HCT116 (cell line): ENCODE measurements at regions of chr3 and their contacts with region 1.

Region 1: GRCh38 chr3:8324740-8325139 is 176.9 kb upstream of the LMCD1 start:
- DNase-seq: peak; percentile 40
- ATAC-seq: peak; percentile 98
- H3K4me3 ChIP-seq: no peak overlapping the region
- H3K27ac ChIP-seq: no peak overlapping the region
- H3K4me1 ChIP-seq: peaks cover 0 to 8% of the 10 kb centered on the region in 2 experiments; a peak in 1 of 4 replicates
- H3K27me3 ChIP-seq: peaks cover 25% of the 10 kb centered on the region
- CTCF ChIP-seq: peak; percentile 42 to 83 (median 73)
- POLR2A ChIP-seq: no peak
- RAD21 ChIP-seq: peak; percentile 65

Region 2: DNA sequence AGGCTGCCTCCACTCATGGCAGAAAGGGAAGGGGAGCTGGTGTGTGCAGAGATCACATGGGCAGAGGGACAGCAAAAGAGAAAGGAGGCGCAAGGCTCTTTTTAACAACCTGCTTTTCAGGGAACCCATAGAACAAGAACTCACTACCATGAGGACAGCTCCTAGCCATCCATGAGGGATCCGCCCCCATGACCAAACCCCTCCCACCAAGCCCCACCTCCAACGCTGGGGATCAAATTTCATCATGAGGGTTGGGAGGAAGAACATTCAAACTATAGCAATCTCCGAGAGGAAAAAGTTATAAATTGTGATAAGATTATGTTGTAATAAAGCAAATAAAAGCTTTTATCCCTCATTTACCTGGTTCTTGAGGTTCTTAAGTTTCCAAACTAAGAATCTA is 92.2 kb after region 1 on chr3:
- CTCF ChIA-PET with region 1: interaction called, 60 read pairs
- POLR2A ChIA-PET with region 1: interaction called, 5 read pairs
- RAD21 ChIA-PET with region 1: interaction called in 1 of 2 experiments, 10 read pairs
- intact Hi-C with region 1: loop called (anchors 2 kb)
- DNase-seq: peak; percentile 6
- ATAC-seq: peak; percentile 90
- H3K4me3 ChIP-seq: no peak overlapping the region
- H3K27ac ChIP-seq: no peak overlapping the region
- H3K4me1 ChIP-seq: peaks cover 3 to 4% of the 10 kb centered on the region in 2 experiments; a peak in 2 of 4 replicates
- H3K27me3 ChIP-seq: no peaks in the 10 kb centered on the region; the same call in 1 of the 2 replicates
- CTCF ChIP-seq: no peak
- POLR2A ChIP-seq: no peak
- RAD21 ChIP-seq: no peak

Region 3: GRCh38 chr3:8607234-8608040 is 282.7 kb after region 1 on chr3:
- CTCF ChIA-PET with region 1: interaction called, 5 read pairs
- POLR2A ChIA-PET with region 1: no interaction called
- RAD21 ChIA-PET with region 1: no interaction called
- intact Hi-C with region 1: loop called (anchors 5 kb)
- DNase-seq: peak; percentile 15
- ATAC-seq: peak; percentile 77
- H3K4me3 ChIP-seq: no peak overlapping the region
- H3K27ac ChIP-seq: no peak overlapping the region
- H3K4me1 ChIP-seq: no peaks in the 10 kb centered on the region
- H3K27me3 ChIP-seq: no peaks in the 10 kb centered on the region; the same call in 1 of the 2 replicates
- CTCF ChIP-seq: peak; percentile 40 to 56 (median 52); a peak in 4 of 6 replicates
- POLR2A ChIP-seq: no peak
- RAD21 ChIP-seq: peak; percentile 77